Activated CD4-positive, alpha-beta memory T cell treated with anti-CD3 and anti-CD28 coated beads for 36 hours (primary cell): ENCODE measurements at regions of chr13 and their contacts with region 1.

Region 1: DNA sequence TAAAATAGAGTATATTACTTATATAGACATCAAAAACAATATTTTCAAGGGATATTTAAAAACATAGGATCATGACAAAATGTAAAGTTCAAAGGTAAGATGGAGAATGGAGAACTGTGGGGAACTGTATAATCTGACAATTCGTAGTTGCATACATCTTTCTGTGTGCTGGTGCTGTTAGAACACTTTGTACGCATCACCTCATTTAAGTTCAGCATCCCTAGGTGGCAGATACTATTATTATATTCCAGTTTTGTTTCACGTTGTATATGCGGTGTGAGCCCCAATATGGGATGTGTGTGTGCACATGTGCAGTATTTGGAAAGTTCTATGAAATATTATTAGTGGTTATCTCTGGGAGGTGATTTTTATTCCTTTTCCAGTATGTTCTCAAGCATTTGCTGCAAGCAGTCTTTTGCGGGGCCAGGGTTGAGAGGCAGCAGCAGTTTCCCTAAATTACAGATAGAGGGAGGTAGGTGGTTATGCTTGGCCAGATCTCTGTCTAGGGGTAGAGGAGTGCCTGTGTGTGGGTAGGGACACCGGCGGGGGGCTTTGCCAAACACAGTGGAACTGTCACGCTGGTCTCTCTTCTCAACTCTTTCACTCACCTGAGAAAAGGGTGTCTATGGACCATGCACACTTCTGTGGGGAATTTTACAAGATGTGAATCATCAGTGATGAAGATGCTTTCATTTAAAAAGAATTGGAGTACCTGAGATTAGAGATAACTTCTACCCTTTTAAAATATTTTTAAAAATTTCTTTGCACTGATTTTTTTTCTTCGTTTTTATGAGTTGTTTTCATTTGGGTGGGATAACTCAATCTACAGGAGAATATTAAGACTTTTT is 55.6 kb upstream of the ALOX5AP start:
- DNase-seq: peak; percentile 48
- H3K4me3 Mint-ChIP-seq: no peak overlapping the region
- H3K27ac Mint-ChIP-seq: peak overlapping the region; percentile 6
- H3K4me1 Mint-ChIP-seq: peaks cover 9% of the 10 kb centered on the region
- H3K27me3 Mint-ChIP-seq: peaks cover 2% of the 10 kb centered on the region

Region 2: DNA sequence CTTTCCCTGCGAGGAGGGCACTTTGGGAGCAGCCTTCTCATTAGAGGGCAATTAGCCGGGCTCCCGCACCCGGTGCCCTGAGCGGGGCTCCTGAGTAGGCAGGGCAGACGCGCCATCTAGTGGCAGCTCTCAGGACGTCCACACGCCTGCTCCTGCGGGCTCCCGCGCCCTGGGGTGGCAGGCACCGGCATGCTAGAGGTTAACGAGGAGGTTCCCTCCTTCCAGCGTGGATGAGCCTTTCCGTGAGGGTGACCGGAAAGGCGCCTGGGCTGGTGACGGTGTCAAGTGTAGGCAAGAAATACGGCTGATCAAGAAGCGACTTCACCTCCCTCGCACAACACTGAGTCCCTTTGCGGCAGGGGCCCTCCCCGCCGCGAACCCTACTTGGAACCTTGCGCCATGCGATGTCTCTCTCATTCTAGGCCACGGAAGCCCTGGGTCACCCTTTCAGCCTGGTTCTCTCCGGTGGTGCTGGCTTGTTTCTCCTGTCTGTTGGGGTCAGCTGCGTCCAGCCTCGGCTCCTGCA is 123.3 kb after region 1 on chr13:
- CTCF ChIA-PET with region 1: interaction called, 5 read pairs
- POLR2A ChIA-PET with region 1: no interaction called
- intact Hi-C with region 1: loop called (anchors 1 kb)
- DNase-seq: peak; percentile 89
- H3K4me3 Mint-ChIP-seq: no peak overlapping the region
- H3K27ac Mint-ChIP-seq: no peak overlapping the region
- H3K4me1 Mint-ChIP-seq: peaks cover 14% of the 10 kb centered on the region
- H3K27me3 Mint-ChIP-seq: no peaks in the 10 kb centered on the region